Left colon (tissue), 2 donors: ENCODE measurements at regions of chr3 and their contacts with region 1.

Region 1: DNA sequence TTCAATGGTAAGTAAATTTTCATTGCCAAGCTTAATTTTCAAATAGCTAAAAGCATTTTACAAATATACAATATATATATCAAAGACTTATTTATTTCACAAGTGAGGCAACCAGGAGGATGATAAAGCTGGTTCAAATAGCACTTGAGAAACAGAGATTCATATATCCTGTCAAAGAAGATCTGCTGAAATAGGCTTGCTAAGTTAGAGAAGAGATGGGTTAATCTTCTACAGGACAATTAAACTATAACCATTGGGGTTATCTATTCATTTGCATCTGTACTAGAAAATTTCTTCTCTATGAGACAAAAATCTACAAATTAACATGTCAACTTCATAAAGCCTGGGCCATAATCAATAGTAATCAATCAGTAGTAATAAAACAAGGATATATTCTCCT is 637.7 kb upstream of the UBE2E2 start:
- DNase-seq: no peak
- ATAC-seq: no peak

Region 2: GRCh38 chr3:22887664-22888291 is 322.4 kb after region 1 on chr3:
- intact Hi-C with region 1: loop called in 1 of 2 experiments (anchors 10 kb)
- DNase-seq: peak in 1 of 2 donors; percentile 12
- ATAC-seq: peak; percentile 60

Region 3: DNA sequence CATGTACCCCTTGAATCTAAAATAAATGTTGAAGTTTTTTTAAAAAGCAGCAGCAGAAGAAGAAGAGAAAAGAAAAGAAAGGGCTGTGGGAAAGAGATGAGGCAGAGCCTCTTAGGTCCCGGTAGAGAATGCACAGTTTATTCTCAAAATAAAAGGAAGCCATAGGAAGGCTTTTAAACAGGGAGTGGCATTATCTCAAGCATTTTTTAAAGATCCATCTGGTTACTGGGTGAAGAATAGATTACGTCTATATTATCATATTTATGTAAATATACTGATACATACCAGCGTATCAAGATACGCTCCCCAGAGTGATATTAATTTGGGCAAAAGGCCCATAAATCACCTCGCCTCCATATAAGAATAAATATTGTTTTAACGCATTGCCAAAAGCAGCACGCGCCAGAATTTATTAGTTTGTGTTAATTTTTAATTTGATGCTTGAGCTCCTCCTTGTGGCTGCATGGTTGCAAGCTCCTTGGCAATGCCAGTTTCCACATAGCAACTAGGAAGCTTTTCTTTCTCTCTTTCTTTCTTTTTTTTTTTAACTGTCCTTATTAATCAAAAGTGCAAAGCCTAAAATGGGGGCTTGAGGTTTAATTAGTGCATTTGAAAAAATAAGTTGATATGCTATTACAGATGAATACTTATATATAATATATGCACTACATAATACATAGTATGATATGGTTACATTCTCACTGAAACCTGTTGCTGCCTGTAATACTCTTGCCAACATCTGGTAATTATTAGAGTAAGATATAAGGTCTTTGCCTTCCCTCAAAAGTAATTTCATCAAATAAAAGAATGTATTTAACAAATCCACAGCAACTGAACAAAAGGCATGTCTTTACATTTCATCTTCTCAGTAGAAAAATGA is 395.0 kb after region 1 on chr3:
- intact Hi-C with region 1: loop called in 1 of 2 experiments (anchors 10 kb)
- DNase-seq: peak in 1 of 2 donors; percentile 42
- ATAC-seq: peak; percentile 59